Activated B cell treated with CpG ODN at 0.5 μM for 24 hours (primary cell): ENCODE measurements at regions of chr10 and their contacts with region 1.

Region 1: DNA sequence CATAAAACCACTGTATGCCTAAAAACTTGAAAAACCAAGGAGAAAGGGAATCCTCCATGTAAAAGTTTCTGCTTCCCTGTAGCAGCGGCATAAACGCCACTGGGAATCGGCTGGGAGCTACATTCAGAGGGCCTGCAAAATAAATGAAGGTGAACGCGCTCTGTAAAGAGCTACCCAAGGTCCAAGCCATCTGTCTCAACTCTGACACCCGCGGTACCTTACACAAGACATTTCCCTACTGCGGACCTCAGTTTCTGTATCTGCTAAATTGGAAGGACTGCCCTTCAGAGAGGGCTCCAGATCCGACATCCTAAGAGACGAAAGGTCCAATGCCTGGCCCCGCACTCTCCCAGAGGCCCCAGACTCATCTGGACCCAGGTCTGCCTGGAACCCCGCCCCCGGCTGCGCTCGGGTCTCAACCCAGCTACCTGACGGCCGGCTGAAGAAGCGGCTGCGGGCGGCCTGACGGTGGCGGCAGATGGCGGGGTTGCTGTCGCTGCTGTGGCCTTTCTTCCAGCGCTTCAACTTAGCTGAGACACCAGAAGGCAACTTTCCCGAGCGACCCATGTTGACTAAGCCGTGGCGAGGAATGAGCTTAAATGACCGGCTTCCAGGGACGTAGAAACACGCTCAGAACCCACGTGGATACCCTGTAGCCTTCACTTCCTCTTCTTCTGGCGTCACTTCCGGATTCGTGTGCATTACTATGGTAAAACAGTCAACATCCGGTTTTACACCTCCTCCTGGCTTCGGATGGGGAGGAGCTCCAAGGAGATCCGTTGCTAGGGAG is at the start of gene RRP12:
- DNase-seq: peak; percentile 66
- ATAC-seq: peak; percentile 89
- H3K4me3 Mint-ChIP-seq: peak within 1 kb of the TSS; percentile 91
- H3K27ac Mint-ChIP-seq: peak within 1 kb of the TSS; percentile 92
- H3K4me1 Mint-ChIP-seq: peaks cover 18% of the 10 kb centered on the region
- H3K27me3 Mint-ChIP-seq: no peaks in the 10 kb centered on the region
- CTCF ChIP-seq: no peak
- total RNA-seq, gene RRP12: 61.8 and 62.6 TPM in 2 replicates

Region 2: DNA sequence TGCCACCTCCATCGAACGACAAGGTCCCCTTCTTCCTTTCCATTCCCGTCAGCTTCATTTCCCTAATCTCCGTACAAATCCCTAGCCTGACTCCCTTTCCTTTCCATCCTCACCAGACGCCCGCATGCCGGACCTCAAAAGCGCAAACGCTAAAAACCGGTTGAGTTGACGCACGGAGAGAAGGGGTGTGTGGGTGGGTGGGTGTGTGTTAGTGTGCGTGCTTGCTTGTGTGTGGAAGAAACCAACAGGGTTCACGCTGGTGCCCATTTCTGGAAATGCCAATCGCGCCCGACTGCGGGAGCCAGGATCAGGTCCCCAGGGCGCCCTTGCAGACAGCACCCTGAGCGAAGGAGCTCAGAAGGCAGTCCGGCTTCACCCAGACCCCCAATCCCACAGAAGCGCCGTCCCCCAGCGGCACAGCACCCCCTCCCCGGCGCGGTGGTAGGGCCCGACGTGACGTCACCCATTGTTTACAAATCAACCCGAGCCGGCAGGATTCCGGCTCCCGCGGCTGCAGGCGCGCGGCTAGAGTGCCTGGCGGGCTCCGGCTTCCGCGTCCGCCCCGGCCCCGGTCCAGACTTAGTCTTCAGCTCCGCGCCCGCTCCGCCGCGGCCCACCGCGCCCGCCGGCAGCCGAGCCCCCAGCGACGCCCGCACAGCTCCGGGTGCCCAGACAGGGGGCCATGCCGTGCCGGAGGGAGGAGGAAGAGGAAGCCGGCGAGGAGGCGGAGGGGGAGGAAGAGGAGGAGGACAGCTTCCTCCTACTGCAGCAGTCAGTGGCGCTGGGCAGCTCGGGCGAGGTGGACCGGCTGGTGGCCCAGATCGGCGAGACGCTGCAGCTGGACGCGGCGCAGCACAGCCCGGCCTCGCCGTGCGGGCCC is 81.8 kb before region 1 on chr10 and contains the start of gene FRAT1:
- CTCF ChIA-PET with region 1: interaction called, 4 read pairs
- POLR2A ChIA-PET with region 1: interaction called, 7 read pairs
- intact Hi-C with region 1: loop called (anchors 1 kb)
- DNase-seq: peak; percentile 91
- ATAC-seq: peak; percentile 66
- H3K4me3 Mint-ChIP-seq: peak within 1 kb of the TSS; percentile 92
- H3K27ac Mint-ChIP-seq: peak within 1 kb of the TSS; percentile 100
- H3K4me1 Mint-ChIP-seq: peaks cover 30% of the 10 kb centered on the region
- H3K27me3 Mint-ChIP-seq: no peaks in the 10 kb centered on the region
- CTCF ChIP-seq: no peak
- total RNA-seq, gene FRAT1: 6.9 TPM in 2 replicates

Region 3: DNA sequence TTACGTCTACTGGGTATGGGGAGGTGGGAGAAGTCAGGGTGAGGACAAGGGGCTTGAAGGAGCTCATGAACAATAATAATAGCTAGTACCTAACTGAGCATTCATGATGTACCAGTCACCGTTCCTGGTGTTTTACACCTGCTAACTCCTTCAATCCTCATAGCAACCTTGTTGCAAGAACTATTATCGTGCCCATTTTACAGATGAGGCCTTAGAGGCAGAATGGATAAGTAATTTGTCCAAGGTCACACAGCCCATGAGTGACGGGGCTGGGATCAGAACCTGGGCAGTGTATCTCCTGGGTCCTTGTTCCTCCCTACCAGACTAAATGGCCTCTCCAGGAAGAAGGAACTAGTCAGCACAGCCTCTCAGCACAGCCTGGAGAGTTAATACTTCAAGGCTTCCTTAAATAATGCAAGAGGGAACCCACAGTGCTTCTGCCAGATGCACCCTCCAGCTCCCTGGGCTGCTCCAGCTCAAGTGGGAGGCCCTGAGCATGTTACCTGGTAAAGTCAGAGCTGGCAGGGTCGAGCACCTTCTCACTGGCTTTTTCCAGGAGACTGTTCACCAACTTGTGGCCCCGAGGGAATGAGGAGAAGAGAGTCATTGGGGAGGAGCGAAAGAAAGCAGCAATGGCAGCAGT is 28.5 kb before region 1 on chr10:
- CTCF ChIA-PET with region 1: no interaction called
- POLR2A ChIA-PET with region 1: no interaction called
- intact Hi-C with region 1: no loop called
- DNase-seq: no peak
- ATAC-seq: no peak
- H3K4me3 Mint-ChIP-seq: no peak overlapping the region
- H3K27ac Mint-ChIP-seq: no peak overlapping the region
- H3K4me1 Mint-ChIP-seq: peaks cover 4% of the 10 kb centered on the region
- H3K27me3 Mint-ChIP-seq: no peaks in the 10 kb centered on the region
- CTCF ChIP-seq: no peak

Region 4: DNA sequence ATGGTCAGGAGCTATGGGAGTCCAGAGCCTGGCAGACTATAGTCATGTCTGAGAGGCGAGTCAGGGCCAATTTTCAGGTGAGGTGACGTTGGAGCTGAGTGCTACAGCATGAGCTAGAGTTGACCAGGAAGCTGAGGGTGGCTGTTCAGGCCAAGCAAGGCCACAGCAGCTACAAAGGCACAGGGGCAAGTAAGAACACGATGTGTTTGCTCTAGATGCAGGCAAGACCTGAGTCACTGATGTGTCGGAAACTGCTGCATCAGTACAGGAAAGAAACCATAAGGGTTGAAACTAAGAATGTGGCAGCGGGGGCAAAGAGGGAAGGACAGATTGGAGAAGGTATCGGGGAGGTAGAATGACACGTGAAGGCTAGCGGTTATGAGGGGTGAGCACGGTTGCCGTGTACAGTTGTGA is 12.0 kb after region 1 on chr10:
- CTCF ChIA-PET with region 1: no interaction called
- POLR2A ChIA-PET with region 1: interaction called, 3 read pairs
- intact Hi-C with region 1: loop called (anchors 1 kb)
- DNase-seq: no peak
- ATAC-seq: no peak
- H3K4me3 Mint-ChIP-seq: no peak overlapping the region
- H3K27ac Mint-ChIP-seq: no peak overlapping the region
- H3K4me1 Mint-ChIP-seq: peaks cover 13% of the 10 kb centered on the region
- H3K27me3 Mint-ChIP-seq: no peaks in the 10 kb centered on the region
- CTCF ChIP-seq: no peak

Region 5: GRCh38 chr10:97445722-97446639 is 45.1 kb after region 1 on chr10 and contains the starts of genes EXOSC1 and ZDHHC16:
- CTCF ChIA-PET with region 1: no interaction called
- POLR2A ChIA-PET with region 1: interaction called, 4 read pairs
- intact Hi-C with region 1: loop called (anchors 1 kb)
- DNase-seq: peak; percentile 80
- ATAC-seq: peak; percentile 98
- H3K4me3 Mint-ChIP-seq: peak within 1 kb of the TSS; percentile 99
- H3K27ac Mint-ChIP-seq: peak within 1 kb of the TSS; percentile 93
- H3K4me1 Mint-ChIP-seq: peaks cover 43% of the 10 kb centered on the region
- H3K27me3 Mint-ChIP-seq: no peaks in the 10 kb centered on the region
- CTCF ChIP-seq: no peak
- total RNA-seq, gene EXOSC1: 47.4 and 53.8 TPM in 2 replicates
- total RNA-seq, gene ZDHHC16: 39.0 and 40.6 TPM in 2 replicates

Region 6: DNA sequence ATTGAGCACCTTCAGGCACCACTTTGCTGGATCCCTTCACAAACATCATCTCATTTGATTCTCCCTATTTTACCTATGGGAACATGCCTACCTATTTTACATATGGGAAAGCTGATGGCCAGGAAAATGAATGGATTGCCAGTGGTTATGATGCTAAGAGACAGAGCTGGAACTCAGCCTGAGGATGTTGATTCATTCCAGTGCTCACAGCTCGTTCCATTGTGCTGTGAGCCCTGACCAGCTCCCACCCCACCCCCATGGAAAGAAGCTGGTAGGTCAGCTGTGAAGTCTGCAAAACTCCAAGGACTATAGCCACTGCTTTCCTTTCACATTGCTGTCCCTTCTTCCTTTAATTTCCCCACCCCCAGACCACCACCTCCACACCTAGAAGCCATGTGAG is 107.5 kb after region 1 on chr10:
- CTCF ChIA-PET with region 1: no interaction called
- POLR2A ChIA-PET with region 1: no interaction called
- intact Hi-C with region 1: no loop called
- DNase-seq: no peak
- ATAC-seq: no peak
- H3K4me3 Mint-ChIP-seq: no peak overlapping the region
- H3K27ac Mint-ChIP-seq: no peak overlapping the region
- H3K4me1 Mint-ChIP-seq: peaks cover 8% of the 10 kb centered on the region
- H3K27me3 Mint-ChIP-seq: peaks cover 7% of the 10 kb centered on the region
- CTCF ChIP-seq: no peak

Region 7: GRCh38 chr10:97632949-97633884 is 232.4 kb after region 1 on chr10 and contains the start of gene MORN4:
- CTCF ChIA-PET with region 1: no interaction called
- POLR2A ChIA-PET with region 1: no interaction called
- intact Hi-C with region 1: loop called (anchors 1 kb)
- DNase-seq: peak; percentile 84
- ATAC-seq: peak; percentile 99
- H3K4me3 Mint-ChIP-seq: peak within 1 kb of the TSS; percentile 100
- H3K27ac Mint-ChIP-seq: peak within 1 kb of the TSS; percentile 83
- H3K4me1 Mint-ChIP-seq: peaks cover 16% of the 10 kb centered on the region
- H3K27me3 Mint-ChIP-seq: no peaks in the 10 kb centered on the region
- CTCF ChIP-seq: no peak
- total RNA-seq, gene MORN4: 1.5 and 2.9 TPM in 2 replicates